ENCODE measurements at regions of chr9 and their contacts with region 1.

Region 1: DNA sequence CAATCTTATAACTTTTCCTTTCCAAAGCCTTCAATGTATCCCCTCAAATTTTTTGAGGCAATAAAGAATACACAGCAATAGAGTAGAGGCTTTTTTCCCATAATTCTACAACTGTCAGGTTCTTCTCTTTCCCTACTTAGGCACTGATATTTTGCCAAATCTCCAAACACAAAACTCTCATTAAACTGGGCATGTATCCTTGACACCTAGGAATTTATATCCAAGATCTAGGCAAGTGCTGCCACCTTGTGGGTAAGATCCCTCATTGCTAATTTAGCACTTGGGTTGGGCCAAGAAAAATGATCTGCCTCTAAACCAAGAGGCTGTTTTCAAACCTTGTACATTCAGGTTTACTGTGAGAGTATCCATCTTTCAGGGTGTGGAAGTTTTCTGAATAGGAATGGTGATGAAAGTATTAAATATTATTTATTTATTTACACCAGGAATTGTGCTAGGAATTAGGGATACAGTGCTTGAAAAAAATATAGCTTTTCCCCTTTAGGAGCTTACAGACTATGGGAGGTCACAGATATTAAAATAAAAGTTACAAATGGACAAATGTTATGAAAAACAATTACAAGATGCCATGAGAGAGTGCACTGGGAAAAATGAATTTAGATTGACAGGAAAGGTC is 17.6 kb downstream of the TSTD2 start:
- DNase-seq: peak; percentile 77
- H3K4me3 Mint-ChIP-seq: no peak overlapping the region
- H3K27ac Mint-ChIP-seq: no peak overlapping the region
- H3K4me1 Mint-ChIP-seq: peaks cover 7% of the 10 kb centered on the region
- H3K27me3 Mint-ChIP-seq: no peaks in the 10 kb centered on the region

Region 2: GRCh38 chr9:96856363-96857286 is 758.9 kb before region 1 on chr9:
- CTCF ChIA-PET with region 1: interaction called, 16 read pairs
- DNase-seq: peak; percentile 81
- H3K4me3 Mint-ChIP-seq: no peak overlapping the region
- H3K27ac Mint-ChIP-seq: no peak overlapping the region
- H3K4me1 Mint-ChIP-seq: peaks cover 28% of the 10 kb centered on the region
- H3K27me3 Mint-ChIP-seq: peaks cover 19% of the 10 kb centered on the region

Region 3: DNA sequence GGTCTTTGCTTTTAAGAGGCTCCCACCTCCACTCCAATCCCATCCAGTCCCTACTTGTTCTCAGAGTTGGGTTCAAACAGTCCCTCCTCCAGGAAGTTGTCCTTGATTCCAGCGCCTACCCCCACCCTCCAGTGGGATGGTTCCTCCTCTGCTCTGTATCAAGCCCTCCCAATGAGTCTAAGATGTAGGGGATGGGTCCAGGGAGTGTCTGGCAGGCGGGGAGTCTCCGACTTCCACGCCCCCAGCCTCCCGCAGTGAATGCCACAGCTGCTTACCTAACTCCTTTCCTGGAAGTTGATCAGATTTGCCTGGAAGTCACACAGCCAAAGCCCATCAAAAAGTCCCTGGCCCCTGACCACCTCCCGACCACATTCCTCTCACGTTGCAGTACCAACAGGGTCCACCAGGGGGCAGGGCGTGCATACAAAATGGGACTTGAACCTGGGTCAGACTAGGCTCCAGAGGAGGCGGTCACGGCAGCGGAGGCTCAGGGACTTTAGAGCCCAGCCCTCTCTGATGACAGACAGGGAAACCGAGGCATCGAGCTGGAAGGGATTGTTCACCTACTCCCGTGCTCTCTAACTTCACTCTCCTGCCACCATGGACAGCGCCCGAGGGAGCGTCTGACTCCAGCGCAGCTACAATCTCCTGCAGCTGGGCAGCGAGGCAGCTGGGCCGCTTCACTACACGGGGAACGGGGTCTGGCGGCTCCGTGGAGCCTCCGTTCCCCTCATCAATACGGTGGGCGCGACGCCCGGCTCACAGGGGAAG is 228.6 kb before region 1 on chr9:
- CTCF ChIA-PET with region 1: interaction called, 42 read pairs
- DNase-seq: peak; percentile 79
- H3K4me3 Mint-ChIP-seq: no peak overlapping the region
- H3K27ac Mint-ChIP-seq: no peak overlapping the region
- H3K4me1 Mint-ChIP-seq: peaks cover 16% of the 10 kb centered on the region
- H3K27me3 Mint-ChIP-seq: peaks cover 44% of the 10 kb centered on the region

Region 4: DNA sequence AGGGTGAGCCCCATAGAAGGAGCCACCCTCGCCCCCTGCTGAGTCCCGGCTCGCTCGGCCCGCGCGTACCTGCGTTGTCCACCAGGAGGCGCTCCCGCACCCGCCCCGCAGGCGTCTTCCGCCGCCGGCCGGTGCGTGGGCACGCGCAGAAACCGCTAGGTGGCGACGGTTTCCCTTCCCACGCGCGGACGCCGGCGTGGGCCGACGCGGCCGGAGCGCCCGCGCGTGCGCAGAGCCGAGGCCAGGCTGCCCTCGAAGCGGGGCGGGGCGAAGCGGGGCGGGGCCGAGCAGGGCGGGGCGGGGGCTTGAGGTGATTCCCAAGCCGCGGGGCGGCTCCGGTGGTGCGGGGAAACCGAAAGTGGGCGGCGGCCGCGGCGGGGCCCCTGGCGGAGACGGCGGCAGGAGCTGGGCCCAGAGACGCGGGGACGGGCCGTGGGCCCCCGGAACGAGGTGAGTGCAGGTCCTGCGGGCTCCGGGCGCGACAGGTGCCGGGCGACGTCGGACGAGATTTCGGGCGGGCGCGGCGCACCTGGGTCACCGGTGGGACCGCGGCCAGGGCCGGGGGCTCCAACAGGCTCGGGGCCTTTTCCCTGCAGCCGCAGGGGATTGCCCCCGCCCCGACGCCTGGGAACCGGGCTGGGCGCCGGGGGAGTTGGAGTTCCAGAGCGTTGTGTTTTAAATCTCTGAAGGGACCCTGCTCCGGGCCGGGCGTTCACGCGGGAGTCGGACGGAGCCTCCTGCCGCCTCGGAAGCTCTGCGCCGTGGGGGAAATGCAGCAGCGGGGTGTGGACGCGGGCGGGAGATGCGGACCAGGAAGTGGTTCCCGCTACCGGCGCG is 203.5 kb before region 1 on chr9 and contains the start of gene TDRD7:
- CTCF ChIA-PET with region 1: interaction called, 26 read pairs
- DNase-seq: peak; percentile 90
- H3K4me3 Mint-ChIP-seq: peak within 1 kb of the TSS; percentile 84
- H3K27ac Mint-ChIP-seq: peak within 1 kb of the TSS; percentile 76
- H3K4me1 Mint-ChIP-seq: peaks cover 33% of the 10 kb centered on the region
- H3K27me3 Mint-ChIP-seq: peaks cover 31% of the 10 kb centered on the region

Region 5: GRCh38 chr9:97468658-97469448 is 146.7 kb before region 1 on chr9:
- CTCF ChIA-PET with region 1: interaction called, 54 read pairs
- DNase-seq: peak; percentile 64
- H3K4me3 Mint-ChIP-seq: no peak overlapping the region
- H3K27ac Mint-ChIP-seq: no peak overlapping the region
- H3K4me1 Mint-ChIP-seq: no peaks in the 10 kb centered on the region
- H3K27me3 Mint-ChIP-seq: no peaks in the 10 kb centered on the region

Region 6: GRCh38 chr9:97501177-97501971 is 114.2 kb before region 1 on chr9 and contains the start of gene TMOD1:
- CTCF ChIA-PET with region 1: interaction called, 10 read pairs
- DNase-seq: peak; percentile 58
- H3K4me3 Mint-ChIP-seq: peak within 1 kb of the TSS; percentile 65
- H3K27ac Mint-ChIP-seq: no peak within 1 kb of the TSS
- H3K4me1 Mint-ChIP-seq: peaks cover 20% of the 10 kb centered on the region
- H3K27me3 Mint-ChIP-seq: peaks cover 62% of the 10 kb centered on the region

Region 7: GRCh38 chr9:98118640-98119601 is 503.4 kb after region 1 on chr9 and contains the start of gene TRIM14:
- CTCF ChIA-PET with region 1: no interaction called
- DNase-seq: peak; percentile 82
- H3K4me3 Mint-ChIP-seq: peak within 1 kb of the TSS; percentile 88
- H3K27ac Mint-ChIP-seq: peak within 1 kb of the TSS; percentile 99
- H3K4me1 Mint-ChIP-seq: peaks cover 60% of the 10 kb centered on the region
- H3K27me3 Mint-ChIP-seq: no peaks in the 10 kb centered on the region

Measured in activated naive CD4-positive, alpha-beta T cell treated with anti-CD3 and anti-CD28 coated beads, Interleukin-2, amount 10 ng/mL, durations not matched to agents 7 days and 5 days (primary cell).